AG04450 (cell line): ENCODE measurements at regions of chr5 and their contacts with region 1.

Region 1: GRCh38 chr5:158074992-158075769 is 216.2 kb upstream of the CLINT1 start:
- DNase-seq: peak; percentile 11
- H3K4me3 ChIP-seq: peak overlapping the region; percentile 1; the same call in 1 of the 2 replicates
- H3K27ac ChIP-seq: no peak overlapping the region
- H3K27me3 ChIP-seq: no peaks in the 10 kb centered on the region
- CTCF ChIP-seq: peak; percentile 95

Region 2: GRCh38 chr5:157761690-157762621 is 313.2 kb before region 1 on chr5:
- CTCF ChIA-PET with region 1: interaction called, 11 read pairs
- POLR2A ChIA-PET with region 1: no interaction called
- DNase-seq: no peak
- H3K4me3 ChIP-seq: no peak overlapping the region
- H3K27ac ChIP-seq: no peak overlapping the region
- H3K27me3 ChIP-seq: no peaks in the 10 kb centered on the region
- CTCF ChIP-seq: peak; percentile 82

Region 3: DNA sequence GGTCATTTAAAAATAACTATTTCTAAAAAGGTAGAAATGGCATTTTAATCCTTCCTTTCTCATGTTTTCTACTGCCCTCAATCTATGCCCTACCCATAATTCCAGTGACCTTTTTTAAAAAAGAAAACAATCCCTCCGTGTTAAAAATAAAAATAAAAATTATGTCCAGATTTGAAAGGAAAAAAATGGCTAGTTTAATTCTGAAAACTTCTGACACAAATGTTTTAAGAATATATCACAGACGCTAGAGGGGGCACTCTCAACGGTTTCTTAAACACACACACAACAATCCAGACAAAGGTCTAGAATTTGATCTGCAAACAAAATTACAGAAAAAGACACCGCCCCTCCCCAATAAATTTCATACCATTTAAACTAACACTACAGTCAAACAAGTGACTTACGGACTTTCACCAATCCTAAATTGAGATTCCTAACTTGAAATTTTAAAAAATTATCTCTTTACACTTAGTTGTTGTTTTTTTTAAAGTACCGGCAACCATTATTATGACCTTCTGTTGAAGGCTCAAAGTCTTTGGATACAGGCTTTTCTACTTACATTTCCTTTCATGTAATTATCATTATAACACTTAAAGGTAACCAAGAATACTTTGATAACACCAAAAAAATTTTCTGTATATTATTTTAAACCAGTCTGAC is 254.5 kb before region 1 on chr5:
- CTCF ChIA-PET with region 1: interaction called, 11 read pairs
- POLR2A ChIA-PET with region 1: no interaction called
- DNase-seq: peak; percentile 6
- H3K4me3 ChIP-seq: no peak overlapping the region
- H3K27ac ChIP-seq: no peak overlapping the region
- H3K27me3 ChIP-seq: no peaks in the 10 kb centered on the region
- CTCF ChIP-seq: peak; percentile 68

Region 4: GRCh38 chr5:158058208-158059120 is 16.7 kb before region 1 on chr5:
- CTCF ChIA-PET with region 1: interaction called, 53 read pairs
- POLR2A ChIA-PET with region 1: no interaction called
- DNase-seq: no peak
- H3K4me3 ChIP-seq: no peak overlapping the region
- H3K27ac ChIP-seq: no peak overlapping the region
- H3K27me3 ChIP-seq: no peaks in the 10 kb centered on the region
- CTCF ChIP-seq: no peak

Region 5: DNA sequence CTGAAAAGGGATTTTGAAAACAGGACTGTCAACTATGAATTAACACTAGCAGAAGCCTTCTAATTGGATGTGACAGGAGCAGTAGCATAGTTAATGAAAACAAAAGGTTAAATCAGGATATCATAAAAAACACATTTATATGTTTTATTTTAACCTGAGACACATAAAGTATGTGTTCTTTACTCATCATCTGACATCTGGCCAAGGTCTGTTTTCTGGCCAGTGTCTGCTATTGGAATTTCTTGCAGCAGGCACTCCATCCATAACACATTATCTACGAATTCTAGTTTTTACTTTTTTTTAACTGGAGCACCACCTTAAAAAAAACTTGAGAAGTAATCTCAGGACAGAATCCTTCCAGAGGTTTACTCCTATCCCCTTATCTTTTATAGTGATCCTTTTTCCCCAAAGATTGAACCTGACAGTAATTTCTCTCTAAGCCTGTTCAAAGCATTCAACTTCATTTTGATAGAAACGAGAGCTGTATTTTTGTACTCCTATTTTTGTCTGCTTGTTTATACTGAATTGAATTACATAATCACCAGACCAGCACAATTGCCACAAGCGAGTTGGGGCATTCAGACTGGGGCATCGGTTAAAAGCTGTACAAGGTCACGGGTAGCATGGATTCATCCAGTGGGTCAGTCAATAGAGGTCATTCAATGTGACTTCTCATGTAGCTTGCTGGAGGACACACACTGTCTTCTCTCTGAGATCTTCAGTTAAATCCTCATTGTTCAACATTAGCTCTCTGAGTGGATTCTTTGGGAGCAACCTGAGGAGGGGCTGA is 10.7 kb before region 1 on chr5:
- CTCF ChIA-PET with region 1: interaction called, 53 read pairs
- POLR2A ChIA-PET with region 1: no interaction called
- DNase-seq: no peak
- H3K4me3 ChIP-seq: no peak overlapping the region
- H3K27ac ChIP-seq: no peak overlapping the region
- H3K27me3 ChIP-seq: peaks cover 3% of the 10 kb centered on the region
- CTCF ChIP-seq: no peak

Region 6: DNA sequence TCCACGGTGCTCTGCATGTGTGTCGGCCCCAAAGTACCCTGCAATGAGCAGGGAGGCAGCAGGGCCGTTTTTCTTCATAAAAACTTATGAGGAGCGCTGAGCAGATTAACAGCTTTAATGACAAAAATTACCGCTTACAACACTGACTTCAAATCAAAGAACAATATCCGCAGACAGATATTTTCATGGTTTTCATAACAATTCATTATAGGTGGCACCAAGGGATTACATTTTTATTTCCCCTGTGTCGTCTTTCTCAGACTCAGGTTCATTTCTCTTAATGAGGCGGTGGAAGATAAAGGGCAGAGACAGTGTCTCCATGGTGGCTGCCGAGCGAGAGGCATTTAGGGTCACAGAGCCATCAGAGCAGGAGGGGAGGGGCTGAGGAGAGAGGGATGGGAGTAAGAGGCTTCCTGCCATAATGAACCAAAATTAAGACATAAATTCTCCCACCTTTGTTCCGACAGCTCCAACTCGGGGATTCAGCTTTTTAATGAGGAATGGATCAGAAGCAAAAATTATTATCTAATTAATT is 24.5 kb after region 1 on chr5:
- CTCF ChIA-PET with region 1: interaction called, 25 read pairs
- POLR2A ChIA-PET with region 1: no interaction called
- DNase-seq: no peak
- H3K4me3 ChIP-seq: no peak overlapping the region
- H3K27ac ChIP-seq: no peak overlapping the region
- H3K27me3 ChIP-seq: no peaks in the 10 kb centered on the region
- CTCF ChIP-seq: no peak

Region 7: GRCh38 chr5:159133041-159133741 is 1058.0 kb after region 1 on chr5:
- CTCF ChIA-PET with region 1: interaction called, 40 read pairs
- POLR2A ChIA-PET with region 1: no interaction called
- DNase-seq: peak; percentile 15
- H3K4me3 ChIP-seq: no peak overlapping the region
- H3K27ac ChIP-seq: no peak overlapping the region
- H3K27me3 ChIP-seq: peaks cover 11% of the 10 kb centered on the region
- CTCF ChIP-seq: peak; percentile 80